ENCODE measurements at regions of chr7 and their contacts with region 1.

Region 1: GRCh38 chr7:21507626-21508343 is 35.1 kb upstream of the DNAH11 start:
- DNase-seq: peak; percentile 57
- H3K4me3 ChIP-seq: no peak overlapping the region
- H3K27ac ChIP-seq: no peak overlapping the region
- H3K4me1 ChIP-seq: no peaks in the 10 kb centered on the region
- H3K27me3 ChIP-seq: no peaks in the 10 kb centered on the region
- CTCF ChIP-seq: peak; percentile 48 to 76 (median 66)
- EP300 ChIP-seq: no peak
- POLR2A ChIP-seq: no peak

Region 2: DNA sequence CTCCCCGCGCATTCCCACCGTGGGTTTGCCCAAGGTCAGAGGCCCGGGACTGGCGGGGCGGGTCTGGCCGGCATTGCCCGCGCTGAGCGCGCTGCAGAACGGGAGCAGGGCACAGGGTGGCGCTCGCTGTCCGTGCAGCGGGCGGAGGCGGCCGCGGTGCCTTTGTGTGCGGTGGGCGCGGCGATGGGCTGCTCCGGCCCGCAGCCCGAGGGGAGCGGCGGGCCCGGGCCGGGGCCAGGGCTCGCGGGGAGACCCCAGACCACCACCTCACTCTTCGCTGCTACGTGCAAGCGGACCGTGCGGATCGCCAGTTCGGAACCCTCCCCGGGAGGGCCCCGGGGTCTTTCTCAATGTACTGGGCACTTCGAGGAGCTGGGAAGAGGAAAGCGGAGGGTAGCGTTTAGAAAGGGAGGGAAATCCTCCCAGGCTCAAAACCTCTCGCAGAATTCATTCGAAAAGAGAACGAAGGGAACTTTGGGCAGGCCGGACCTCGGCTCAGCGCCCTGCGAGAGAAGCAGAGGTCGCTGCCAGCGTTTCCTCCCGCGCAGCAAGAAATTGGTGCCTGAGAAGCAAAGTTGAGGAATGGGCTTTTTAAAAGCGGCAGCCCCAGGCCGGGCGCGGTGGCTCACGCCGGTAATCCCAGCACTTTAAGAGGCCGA is 729.6 kb before region 1 on chr7:
- intact Hi-C with region 1: loop called (anchors 5 kb)
- DNase-seq: no peak
- H3K4me3 ChIP-seq: peak overlapping the region in 3 of 4 donors; percentile 6 to 31 (median 31)
- H3K27ac ChIP-seq: no peak overlapping the region
- H3K4me1 ChIP-seq: peaks cover 0 to 12% (median 11%) of the 10 kb centered on the region in 4 donors
- H3K27me3 ChIP-seq: peaks cover 37 to 99% (median 84%) of the 10 kb centered on the region in 3 donors
- CTCF ChIP-seq: peak in 1 of 4 experiments; percentile 56
- EP300 ChIP-seq: no peak
- POLR2A ChIP-seq: no peak

Region 3: DNA sequence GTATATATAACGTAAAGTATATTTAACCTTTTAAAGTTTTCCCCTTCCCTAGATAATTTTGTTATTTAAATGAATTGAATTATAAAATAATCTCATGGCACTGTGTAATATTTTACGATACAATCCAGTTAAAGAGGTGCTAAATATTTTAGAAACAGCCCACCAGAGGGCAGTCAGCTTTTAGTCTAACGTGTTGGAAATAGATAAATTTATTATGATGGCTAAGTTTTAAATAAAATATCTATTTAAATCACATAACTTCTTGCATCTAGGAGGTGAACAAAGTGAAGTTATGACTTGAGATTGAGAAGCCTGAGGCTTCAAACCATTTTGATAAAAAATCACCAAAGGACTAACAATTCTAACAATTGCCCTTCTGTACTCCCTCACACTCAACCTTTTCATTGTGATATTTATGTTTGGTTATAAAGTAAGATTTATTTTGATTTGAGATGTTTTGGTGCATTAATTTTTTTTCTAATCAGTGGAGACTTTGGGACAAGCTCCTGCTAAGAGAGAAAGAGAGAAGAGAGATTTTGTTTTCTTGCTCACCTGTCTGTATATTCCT is 251.4 kb before region 1 on chr7:
- intact Hi-C with region 1: loop called (anchors 5 kb)
- DNase-seq: no peak
- H3K4me3 ChIP-seq: no peak overlapping the region
- H3K27ac ChIP-seq: no peak overlapping the region
- H3K4me1 ChIP-seq: no peaks in the 10 kb centered on the region
- H3K27me3 ChIP-seq: peaks cover 0 to 54% (median 10%) of the 10 kb centered on the region in 3 donors
- CTCF ChIP-seq: peak in 3 of 4 experiments; percentile 11 to 41 (median 17)
- EP300 ChIP-seq: no peak
- POLR2A ChIP-seq: no peak

Region 4: DNA sequence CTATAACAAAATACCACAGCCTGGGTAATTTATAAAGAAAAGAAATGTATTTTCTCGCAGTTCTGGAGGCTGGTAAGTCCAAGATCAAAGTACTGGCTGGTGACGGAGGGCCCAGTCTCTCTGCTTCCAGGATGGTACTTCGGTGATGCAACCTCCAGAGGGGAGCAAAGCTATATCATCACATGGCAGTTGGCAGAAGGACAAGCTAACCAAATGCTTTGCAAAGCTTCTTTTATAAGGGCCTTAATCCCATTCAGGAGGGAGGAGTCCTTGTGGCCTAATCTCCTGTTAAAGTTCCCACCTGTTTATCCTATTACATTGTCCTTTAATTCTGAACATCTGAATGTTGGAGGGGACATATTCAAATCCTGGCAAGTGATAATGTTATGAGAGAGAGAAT is 214.0 kb before region 1 on chr7:
- intact Hi-C with region 1: no loop called
- DNase-seq: no peak
- H3K4me3 ChIP-seq: no peak overlapping the region
- H3K27ac ChIP-seq: no peak overlapping the region
- H3K4me1 ChIP-seq: no peaks in the 10 kb centered on the region
- H3K27me3 ChIP-seq: no peaks in the 10 kb centered on the region
- CTCF ChIP-seq: no peak
- EP300 ChIP-seq: no peak
- POLR2A ChIP-seq: no peak